IMR-90 (cell line): ENCODE measurements at regions of chrX and their contacts with region 1.

Region 1: DNA sequence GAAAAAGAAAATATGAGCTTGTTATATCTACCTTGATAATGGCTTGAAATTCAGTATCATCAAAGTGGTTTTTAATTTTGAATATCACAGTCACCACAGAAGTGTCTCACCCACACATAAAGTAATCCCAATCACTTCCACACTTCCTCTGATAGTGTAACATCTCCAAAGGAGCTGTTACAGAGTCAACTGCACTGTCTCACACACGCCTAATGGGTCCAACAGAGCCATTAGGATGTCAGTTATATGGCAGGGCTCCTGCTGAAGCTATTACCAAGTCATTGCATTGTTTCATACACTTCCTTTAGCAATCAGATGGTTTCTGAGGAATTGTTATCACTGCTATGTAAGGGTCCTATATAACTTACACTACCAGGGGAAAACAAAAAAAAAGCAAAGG is 432.1 kb upstream of the TEX13C start:
- DNase-seq: no peak
- ATAC-seq: no peak
- H3K4me3 ChIP-seq: no peak overlapping the region
- H3K27ac ChIP-seq: no peak overlapping the region
- H3K4me1 ChIP-seq: no peaks in the 10 kb centered on the region
- H3K27me3 ChIP-seq: no peaks in the 10 kb centered on the region
- CTCF ChIP-seq: no peak
- POLR2A ChIP-seq: no peak
- RAD21 ChIP-seq: no peak

Region 2: GRCh38 chrX:124086411-124086810 is 801.2 kb before region 1 on chrX:
- CTCF ChIA-PET with region 1: interaction called, 10 read pairs
- POLR2A ChIA-PET with region 1: no interaction called
- dilution Hi-C with region 1: no loop called
- in situ Hi-C with region 1: no loop called
- intact Hi-C with region 1: no loop called
- DNase-seq: no peak
- ATAC-seq: no peak
- H3K4me3 ChIP-seq: no peak overlapping the region
- H3K27ac ChIP-seq: no peak overlapping the region
- H3K4me1 ChIP-seq: no peaks in the 10 kb centered on the region
- H3K27me3 ChIP-seq: no peaks in the 10 kb centered on the region
- CTCF ChIP-seq: no peak
- POLR2A ChIP-seq: no peak
- RAD21 ChIP-seq: no peak

Region 3: GRCh38 chrX:124634363-124634762 is 253.2 kb before region 1 on chrX:
- CTCF ChIA-PET with region 1: no interaction called
- POLR2A ChIA-PET with region 1: no interaction called
- dilution Hi-C with region 1: no loop called
- in situ Hi-C with region 1: no loop called
- intact Hi-C with region 1: no loop called
- DNase-seq: no peak
- ATAC-seq: no peak
- H3K4me3 ChIP-seq: no peak overlapping the region
- H3K27ac ChIP-seq: no peak overlapping the region
- H3K4me1 ChIP-seq: no peaks in the 10 kb centered on the region
- H3K27me3 ChIP-seq: no peaks in the 10 kb centered on the region
- CTCF ChIP-seq: no peak
- POLR2A ChIP-seq: no peak
- RAD21 ChIP-seq: no peak